MCF 10A (cell line): ENCODE measurements at regions of chr18 and their contacts with region 1.

Region 1: DNA sequence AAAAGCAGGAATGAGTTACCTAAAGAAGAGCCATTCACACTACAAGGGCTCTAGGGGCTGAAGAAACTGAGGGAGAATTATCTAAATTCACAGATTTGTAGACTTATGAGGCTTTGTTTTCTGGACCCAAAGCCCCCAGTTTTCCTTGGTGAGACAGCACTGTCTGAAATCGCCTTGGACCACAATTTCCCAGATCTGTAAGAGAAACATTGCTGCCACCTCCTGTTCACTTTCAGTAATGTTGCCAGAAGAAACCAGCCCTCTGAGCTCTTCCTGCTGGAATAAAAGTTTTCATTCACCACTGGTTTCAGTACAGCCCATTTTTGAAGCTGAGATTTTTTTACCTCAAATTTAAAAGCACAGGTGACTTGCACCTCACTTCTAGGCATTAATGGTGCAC is 169.2 kb downstream of the CDH20 start:
- DNase-seq: peak; percentile 61
- H3K4me3 Mint-ChIP-seq: no peak overlapping the region
- H3K27ac Mint-ChIP-seq: no peak overlapping the region
- H3K4me1 Mint-ChIP-seq: peaks cover 12% of the 10 kb centered on the region
- H3K27me3 Mint-ChIP-seq: peaks cover 15% of the 10 kb centered on the region
- CTCF ChIP-seq: peak; percentile 66

Region 2: GRCh38 chr18:60684843-60685513 is 817.5 kb before region 1 on chr18:
- CTCF ChIA-PET with region 1: interaction called, 82 read pairs
- POLR2A ChIA-PET with region 1: interaction called, 4 read pairs
- intact Hi-C with region 1: loop called (anchors 1 kb)
- DNase-seq: peak; percentile 46
- H3K4me3 Mint-ChIP-seq: no peak overlapping the region
- H3K27ac Mint-ChIP-seq: no peak overlapping the region
- H3K4me1 Mint-ChIP-seq: no peaks in the 10 kb centered on the region
- H3K27me3 Mint-ChIP-seq: peaks cover 63% of the 10 kb centered on the region
- CTCF ChIP-seq: peak; percentile 67

Region 3: GRCh38 chr18:61085761-61086160 is 416.7 kb before region 1 on chr18:
- CTCF ChIA-PET with region 1: interaction called, 25 read pairs
- POLR2A ChIA-PET with region 1: interaction called, 5 read pairs
- intact Hi-C with region 1: loop called (anchors 1 kb)
- DNase-seq: no peak
- H3K4me3 Mint-ChIP-seq: no peak overlapping the region
- H3K27ac Mint-ChIP-seq: no peak overlapping the region
- H3K4me1 Mint-ChIP-seq: peaks cover 6% of the 10 kb centered on the region
- H3K27me3 Mint-ChIP-seq: no peaks in the 10 kb centered on the region
- CTCF ChIP-seq: no peak

Region 4: GRCh38 chr18:61322265-61322873 is 180.1 kb before region 1 on chr18:
- CTCF ChIA-PET with region 1: interaction called, 173 read pairs
- POLR2A ChIA-PET with region 1: interaction called, 4 read pairs
- intact Hi-C with region 1: loop called (anchors 1 kb)
- DNase-seq: peak; percentile 69
- H3K4me3 Mint-ChIP-seq: no peak overlapping the region
- H3K27ac Mint-ChIP-seq: no peak overlapping the region
- H3K4me1 Mint-ChIP-seq: no peaks in the 10 kb centered on the region
- H3K27me3 Mint-ChIP-seq: peaks cover 15% of the 10 kb centered on the region
- CTCF ChIP-seq: peak; percentile 89

Region 5: DNA sequence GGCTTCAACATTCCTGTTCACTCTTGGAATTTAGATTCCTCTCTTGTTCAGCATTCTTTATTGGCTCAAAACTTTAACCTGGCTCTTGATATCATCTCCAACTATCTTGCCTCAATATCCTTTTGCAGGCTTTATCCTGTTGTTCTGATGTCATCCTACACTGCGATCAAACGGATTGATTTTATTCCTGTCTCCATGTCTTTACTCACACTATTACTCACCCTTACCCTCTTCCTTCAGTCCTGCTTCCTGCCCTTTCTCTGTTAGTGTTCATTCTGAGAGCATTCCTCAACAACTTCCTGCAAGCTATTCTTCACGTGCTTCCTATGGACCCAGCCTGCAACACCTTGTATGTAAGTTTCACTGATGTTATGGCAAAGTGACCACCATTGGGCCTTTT is 125.6 kb after region 1 on chr18:
- CTCF ChIA-PET with region 1: no interaction called
- POLR2A ChIA-PET with region 1: no interaction called
- intact Hi-C with region 1: no loop called
- DNase-seq: peak; percentile 2
- H3K4me3 Mint-ChIP-seq: no peak overlapping the region
- H3K27ac Mint-ChIP-seq: no peak overlapping the region
- H3K4me1 Mint-ChIP-seq: peaks cover 5% of the 10 kb centered on the region
- H3K27me3 Mint-ChIP-seq: no peaks in the 10 kb centered on the region
- CTCF ChIP-seq: no peak